HEK293T (cell line): ENCODE measurements at regions of chr5 and their contacts with region 1.

Region 1: DNA sequence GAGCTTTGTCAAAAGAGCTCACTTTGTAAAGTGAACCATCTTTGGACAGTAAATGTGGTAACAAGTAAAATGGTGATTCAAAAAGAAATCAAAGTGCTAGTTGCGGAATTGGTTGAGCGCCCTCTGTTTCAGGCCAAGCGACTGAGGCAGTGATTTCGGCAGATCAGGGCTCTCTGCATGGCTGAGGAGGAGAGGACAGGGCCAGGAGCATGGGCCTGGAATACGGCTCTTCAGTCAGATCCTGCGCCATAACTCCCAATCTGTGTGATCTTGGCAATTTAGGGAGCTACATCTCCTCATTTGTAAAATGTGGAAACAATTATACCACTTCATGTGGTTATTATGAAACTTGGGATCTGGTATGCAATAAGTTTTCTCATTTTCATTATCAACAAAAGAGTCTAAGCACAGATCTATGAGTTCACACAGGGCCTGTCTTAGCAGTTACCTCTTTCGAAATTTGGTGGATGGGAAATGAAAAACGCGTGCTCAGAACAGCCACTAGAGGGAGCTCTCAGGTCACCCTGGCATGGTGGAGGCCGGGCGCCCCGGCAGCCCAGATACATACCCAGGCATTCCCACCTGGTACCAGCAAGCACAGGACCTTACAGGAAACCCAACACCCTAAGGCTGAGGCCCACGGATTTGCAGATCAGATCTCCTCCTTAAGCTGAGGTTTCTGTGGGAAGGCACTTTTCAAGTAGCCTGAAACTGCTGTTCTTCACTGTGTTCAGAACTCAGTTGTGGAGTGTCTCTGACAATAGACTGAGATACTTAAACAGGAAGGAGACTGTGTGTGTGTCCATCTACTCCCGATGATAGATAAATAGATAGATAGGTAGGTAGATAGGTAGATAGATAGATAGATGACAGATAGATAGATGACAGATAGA is 303.7 kb downstream of the RAB3C start:
- DNase-seq: peak; percentile 77

Region 2: DNA sequence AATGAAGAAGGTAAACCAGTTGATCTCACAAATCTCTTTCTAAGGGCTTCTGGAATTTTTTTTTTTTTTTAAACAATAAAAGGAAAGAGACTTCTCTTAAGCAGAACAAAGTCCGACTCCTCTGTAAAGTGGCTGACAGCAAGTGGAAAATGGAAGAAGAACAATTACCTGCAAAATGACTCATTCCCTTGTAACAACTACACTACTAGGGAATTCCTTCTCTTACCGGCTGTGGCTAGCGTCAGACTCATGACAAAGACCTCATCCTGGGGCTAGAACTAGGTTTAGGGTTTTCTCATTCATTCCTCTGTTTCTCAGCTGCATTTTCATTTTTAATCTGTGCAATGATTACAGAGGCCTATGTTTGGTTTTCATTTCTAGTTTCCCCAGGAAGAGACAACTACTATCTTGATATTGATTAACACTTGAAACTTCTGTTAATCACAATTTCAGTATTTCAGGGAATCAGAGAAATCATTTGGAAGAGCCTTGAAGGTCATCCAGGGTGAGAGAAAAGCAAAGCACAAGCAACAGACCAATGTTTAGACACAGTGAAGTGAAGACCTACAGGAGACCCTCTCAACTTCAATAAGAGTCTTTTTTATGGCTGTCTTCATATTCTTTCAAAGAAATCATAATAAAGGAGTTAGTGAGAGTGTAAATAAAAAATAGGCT is 134.2 kb after region 1 on chr5:
- CTCF ChIA-PET with region 1: interaction called, 10 read pairs
- POLR2A ChIA-PET with region 1: interaction called, 3 read pairs
- DNase-seq: peak; percentile 30

Region 3: GRCh38 chr5:59180515-59180914 is 294.0 kb after region 1 on chr5:
- CTCF ChIA-PET with region 1: interaction called, 10 read pairs
- POLR2A ChIA-PET with region 1: interaction called, 3 read pairs
- DNase-seq: no peak